Psoas muscle (tissue), 8 donors: ENCODE measurements at regions of chr22 and their contacts with region 1.

Region 1: GRCh38 chr22:20243537-20244249 is 24.4 kb downstream of the RTN4R start:
- DNase-seq: peak in 1 of 2 donors; percentile 39
- ATAC-seq: peak in 1 of 4 donors; percentile 38
- H3K4me3 ChIP-seq: no peak overlapping the region
- H3K27ac ChIP-seq: no peak overlapping the region
- H3K4me1 ChIP-seq: peaks cover 9% of the 10 kb centered on the region
- H3K27me3 ChIP-seq: no peaks in the 10 kb centered on the region
- CTCF ChIP-seq: no peak

Region 2: GRCh38 chr22:20156611-20157429 is 86.9 kb before region 1 on chr22:
- intact Hi-C with region 1: no loop called
- DNase-seq: peak; percentile 79 to 89
- ATAC-seq: peak; percentile 77 to 91 (median 88)
- H3K4me3 ChIP-seq: no peak overlapping the region
- H3K27ac ChIP-seq: no peak overlapping the region
- H3K4me1 ChIP-seq: no peaks in the 10 kb centered on the region
- H3K27me3 ChIP-seq: no peaks in the 10 kb centered on the region
- CTCF ChIP-seq: peak; percentile 99

Region 3: DNA sequence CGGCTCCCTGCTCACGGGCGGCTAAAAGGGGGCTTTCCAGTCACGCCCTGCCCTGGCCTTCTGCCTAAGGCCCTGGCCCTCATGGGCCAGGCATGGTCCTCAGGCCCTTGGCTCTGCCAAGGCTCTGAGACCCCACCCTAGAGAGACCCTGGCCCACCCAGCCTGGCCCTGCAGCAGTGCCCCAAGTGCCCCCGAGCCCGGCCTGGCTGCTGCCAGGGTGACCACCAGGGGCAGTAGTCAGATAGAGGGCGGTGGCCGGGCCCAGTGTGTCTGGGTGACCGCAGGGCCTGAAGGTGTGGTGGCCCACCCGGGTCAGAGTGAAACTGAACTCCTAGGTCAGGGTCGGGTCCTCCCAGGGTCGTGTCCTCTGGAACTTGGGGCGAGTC is 63.5 kb before region 1 on chr22:
- intact Hi-C with region 1: loop called in 1 of 2 experiments (anchors 5 kb)
- DNase-seq: no peak
- ATAC-seq: no peak
- H3K4me3 ChIP-seq: no peak overlapping the region
- H3K27ac ChIP-seq: no peak overlapping the region
- H3K4me1 ChIP-seq: no peaks in the 10 kb centered on the region
- H3K27me3 ChIP-seq: peaks cover 0 to 2% (median 0%) of the 10 kb centered on the region in 3 donors
- CTCF ChIP-seq: no peak

Region 4: GRCh38 chr22:20378110-20378509 is 134.4 kb after region 1 on chr22:
- intact Hi-C with region 1: no loop called
- DNase-seq: no peak
- ATAC-seq: no peak
- H3K4me3 ChIP-seq: no peak overlapping the region
- H3K27ac ChIP-seq: no peak overlapping the region
- H3K4me1 ChIP-seq: no peaks in the 10 kb centered on the region
- H3K27me3 ChIP-seq: no peaks in the 10 kb centered on the region
- CTCF ChIP-seq: no peak